HEK293T (cell line): ENCODE measurements at regions of chr19 and their contacts with region 1.

Region 1: DNA sequence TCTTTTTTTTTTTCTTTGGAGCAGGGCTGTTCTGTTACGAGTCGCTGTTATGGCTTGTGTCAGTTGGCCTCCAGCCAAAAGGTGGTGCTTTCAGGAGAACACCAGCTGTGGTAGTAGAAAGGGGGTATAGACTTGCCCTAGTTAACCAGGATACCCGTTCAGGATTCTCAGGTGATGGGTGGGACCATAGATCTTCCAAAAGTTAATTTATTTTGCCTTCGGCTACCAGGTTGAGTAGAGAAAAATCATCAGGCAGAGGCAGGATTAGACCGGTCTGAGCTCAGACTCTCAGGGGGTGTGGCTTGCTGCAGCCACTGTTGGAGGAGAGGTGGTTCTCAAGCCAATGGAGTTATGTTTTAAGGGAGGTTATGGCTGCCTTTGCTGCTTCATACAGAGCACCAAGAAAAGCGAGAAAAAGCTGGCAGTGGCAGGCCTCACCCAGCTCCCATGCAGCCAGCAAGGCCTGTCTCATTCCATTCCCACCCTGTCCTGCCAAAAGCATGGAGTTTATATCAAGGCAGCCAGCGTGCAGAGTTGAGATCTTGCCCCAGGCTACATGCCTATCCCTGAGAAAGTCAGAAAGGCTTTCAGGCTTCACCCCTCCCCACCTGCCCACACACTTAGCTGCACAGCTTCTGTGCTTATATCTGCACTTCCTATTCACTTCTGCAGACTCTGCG is 12.2 kb upstream of the ZNF675 start:
- DNase-seq: no peak

Region 2: GRCh38 chr19:23686621-23687423 is 12.4 kb before region 1 on chr19 and contains the start of gene ZNF675:
- CTCF ChIA-PET with region 1: no interaction called
- POLR2A ChIA-PET with region 1: interaction called, 12 read pairs
- DNase-seq: peak; percentile 68

Region 3: DNA sequence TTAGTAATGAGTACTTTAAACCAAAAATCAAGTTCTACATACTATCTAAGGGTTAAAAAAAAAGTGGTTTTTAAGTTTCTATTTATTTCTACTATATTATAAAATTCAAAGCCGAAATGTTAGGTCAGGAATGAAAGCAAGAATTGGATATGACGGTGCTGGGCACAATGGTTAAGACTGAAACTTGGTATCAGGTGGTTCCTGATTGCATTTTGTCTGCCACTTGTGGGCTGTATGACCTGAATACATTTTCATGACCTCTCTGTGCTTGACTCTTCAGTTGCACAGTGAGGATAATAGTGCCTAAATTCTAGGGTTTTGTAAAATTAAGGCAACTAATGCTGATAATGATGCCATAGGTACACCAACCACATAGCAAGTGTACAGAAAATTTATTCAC is 10.1 kb after region 1 on chr19:
- CTCF ChIA-PET with region 1: no interaction called
- POLR2A ChIA-PET with region 1: no interaction called
- DNase-seq: no peak